ENCODE measurements at regions of chr7 and their contacts with region 1.

Region 1: DNA sequence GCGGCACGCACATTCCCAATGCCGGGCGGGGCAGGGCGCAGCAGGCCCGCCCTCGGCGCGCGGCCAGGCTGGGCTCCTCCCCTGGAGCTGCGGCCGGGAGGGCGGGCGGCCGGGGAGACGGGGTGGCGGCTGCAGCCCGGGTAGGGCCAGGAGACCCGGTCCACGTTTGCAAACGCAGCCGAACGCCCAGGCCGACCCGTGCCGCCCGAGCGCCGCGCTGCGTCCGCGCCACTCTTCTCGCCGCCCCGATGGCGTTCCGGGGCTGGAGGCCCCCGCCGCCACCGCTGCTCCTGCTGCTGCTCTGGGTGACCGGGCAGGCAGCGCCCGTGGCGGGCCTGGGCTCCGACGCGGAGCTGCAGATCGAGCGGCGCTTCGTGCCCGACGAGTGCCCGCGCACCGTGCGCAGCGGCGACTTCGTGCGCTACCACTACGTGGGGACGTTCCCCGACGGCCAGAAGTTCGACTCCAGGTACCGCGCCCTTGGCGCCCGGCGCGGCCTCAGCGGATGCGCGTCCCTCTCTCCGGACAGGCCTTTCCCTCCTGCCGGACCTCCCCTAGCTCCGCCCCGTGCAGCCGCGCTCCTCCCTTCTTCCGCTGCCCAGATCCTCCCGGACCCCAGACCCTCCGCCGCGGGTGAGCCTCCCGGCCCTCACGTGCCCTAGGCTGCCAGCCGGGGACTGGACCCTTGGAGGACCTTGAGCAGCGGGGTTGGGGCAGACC is at the start of gene FKBP9:
- DNase-seq: peak; percentile 52
- ATAC-seq: peak; percentile 74
- H3K4me3 Mint-ChIP-seq: peak within 1 kb of the TSS; percentile 74
- H3K27ac Mint-ChIP-seq: peak within 1 kb of the TSS; percentile 21
- H3K4me1 Mint-ChIP-seq: peaks cover 5% of the 10 kb centered on the region
- H3K27me3 Mint-ChIP-seq: peaks cover 24% of the 10 kb centered on the region
- total RNA-seq, gene FKBP9: 0.37 to 1.0 TPM

Region 2: GRCh38 chr7:33050535-33051318 is 93.2 kb after region 1 on chr7:
- CTCF ChIA-PET with region 1: no interaction called
- POLR2A ChIA-PET with region 1: no interaction called
- intact Hi-C with region 1: loop called in 1 of 2 experiments (anchors 5 kb)
- DNase-seq: peak; percentile 30
- ATAC-seq: peak; percentile 60
- H3K4me3 Mint-ChIP-seq: no peak overlapping the region
- H3K27ac Mint-ChIP-seq: no peak overlapping the region
- H3K4me1 Mint-ChIP-seq: peaks cover 49% of the 10 kb centered on the region
- H3K27me3 Mint-ChIP-seq: no peaks in the 10 kb centered on the region

Region 3: DNA sequence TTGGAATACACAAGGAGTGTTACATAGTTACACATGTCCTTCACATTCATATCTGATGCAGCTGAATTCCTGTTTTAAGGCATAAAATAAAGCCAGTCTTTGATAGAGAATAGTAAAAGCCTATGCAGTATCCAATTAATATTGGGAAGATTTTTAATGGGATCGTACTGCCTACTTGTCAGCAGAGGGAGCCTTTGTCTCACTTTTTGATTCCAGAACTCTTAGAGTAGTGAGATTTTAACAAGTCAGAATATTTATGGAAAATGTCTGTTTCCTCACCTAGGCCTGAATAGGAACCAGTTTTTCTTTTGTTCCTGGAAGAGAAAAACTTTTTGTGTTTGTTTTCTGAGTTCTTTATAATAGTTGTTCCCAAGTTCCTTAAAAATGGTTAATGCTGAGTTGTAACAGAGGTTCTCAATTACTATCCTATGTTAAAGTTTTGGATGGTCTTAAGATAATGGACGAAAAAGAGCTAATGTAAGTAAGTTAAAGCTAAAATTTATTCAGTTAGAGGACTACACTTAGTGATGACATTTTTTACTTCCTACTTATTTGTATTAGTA is 285.9 kb after region 1 on chr7:
- CTCF ChIA-PET with region 1: no interaction called
- POLR2A ChIA-PET with region 1: no interaction called
- intact Hi-C with region 1: no loop called
- DNase-seq: no peak
- ATAC-seq: no peak
- H3K4me3 Mint-ChIP-seq: no peak overlapping the region
- H3K27ac Mint-ChIP-seq: no peak overlapping the region
- H3K4me1 Mint-ChIP-seq: no peaks in the 10 kb centered on the region
- H3K27me3 Mint-ChIP-seq: no peaks in the 10 kb centered on the region